Heart left ventricle (tissue), 16 donors: ENCODE measurements at regions of chr6 and their contacts with region 1.

Region 1: GRCh38 chr6:95577304-95578105 is at the start of gene MANEA:
- DNase-seq: peak; percentile 82 to 91 (median 85)
- ATAC-seq: peak; percentile 87 to 98 (median 97)
- H3K4me3 ChIP-seq: peak within 1 kb of the TSS; percentile 61 to 90 (median 78)
- H3K27ac ChIP-seq: peak within 1 kb of the TSS; percentile 70 to 96 (median 88)
- H3K4me1 ChIP-seq: peaks cover 0 to 38% (median 15%) of the 10 kb centered on the region in 12 donors
- H3K27me3 ChIP-seq: no peaks in the 10 kb centered on the region
- CTCF ChIP-seq: no peak
- POLR2A ChIP-seq: peak in 1 of 2 donors; percentile 45
- total RNA-seq, gene MANEA: 4.3 to 8.7 (median 5.6) TPM

Region 2: GRCh38 chr6:95545226-95545625 is 32.3 kb before region 1 on chr6:
- intact Hi-C with region 1: loop called in 1 of 10 experiments (anchors 2 kb)
- DNase-seq: peak in 2 of 5 donors; percentile 22 to 24
- ATAC-seq: peak; percentile 71 to 85 (median 77)
- H3K4me3 ChIP-seq: no peak overlapping the region
- H3K27ac ChIP-seq: peak overlapping the region in 8 of 12 donors; percentile 19 to 76 (median 66)
- H3K4me1 ChIP-seq: peaks cover 0 to 18% (median 7%) of the 10 kb centered on the region in 12 donors
- H3K27me3 ChIP-seq: no peaks in the 10 kb centered on the region
- CTCF ChIP-seq: no peak
- POLR2A ChIP-seq: no peak

Region 3: GRCh38 chr6:96521644-96522464 is 944.3 kb after region 1 on chr6 and contains the start of gene UFL1:
- intact Hi-C with region 1: loop called in 1 of 10 experiments (anchors 10 kb)
- DNase-seq: peak; percentile 95 to 97 (median 96)
- ATAC-seq: peak; percentile 100
- H3K4me3 ChIP-seq: peak within 1 kb of the TSS; percentile 70 to 93 (median 84)
- H3K27ac ChIP-seq: peak within 1 kb of the TSS; percentile 83 to 98 (median 96)
- H3K4me1 ChIP-seq: peaks cover 0 to 31% (median 24%) of the 10 kb centered on the region in 12 donors
- H3K27me3 ChIP-seq: no peaks in the 10 kb centered on the region
- CTCF ChIP-seq: peak in 1 of 12 donors; percentile 40
- POLR2A ChIP-seq: peak; percentile 32 to 81
- total RNA-seq, gene UFL1: 19.0 to 30.3 (median 24.8) TPM